Right ventricle myocardium superior (tissue), 1 donor: ENCODE measurements at regions of chr3 and their contacts with region 1.

Region 1: GRCh38 chr3:10876661-10877060 is 60.6 kb downstream of the SLC6A11 start:
- DNase-seq: no peak
- ATAC-seq: no peak

Region 2: GRCh38 chr3:10764259-10765051 is 112.2 kb before region 1 on chr3:
- intact Hi-C with region 1: loop called (anchors 10 kb)
- DNase-seq: no peak
- ATAC-seq: no peak

Region 3: DNA sequence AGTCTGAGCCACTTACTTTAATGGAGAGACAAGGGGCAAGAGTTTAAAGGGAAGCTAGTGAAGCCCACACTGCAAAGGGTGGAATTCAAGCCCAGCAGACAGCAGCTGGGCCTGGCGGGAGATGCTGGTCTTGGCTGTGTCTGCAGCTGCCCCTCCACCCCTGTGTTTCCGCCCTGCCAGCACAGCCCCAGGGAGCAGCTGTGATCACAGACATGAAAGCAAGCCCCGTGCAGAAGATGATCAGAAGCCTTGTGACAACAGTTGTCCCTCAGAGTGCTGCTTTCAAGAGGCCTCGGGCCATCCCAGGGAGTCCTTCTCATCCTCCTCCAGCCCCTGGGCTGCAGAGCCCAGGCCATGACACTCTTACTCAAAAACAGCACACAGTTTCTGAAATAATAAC is 91.7 kb after region 1 on chr3:
- intact Hi-C with region 1: no loop called
- DNase-seq: no peak
- ATAC-seq: no peak